SK-N-SH (cell line): ENCODE measurements at regions of chr14 and their contacts with region 1.

Region 1: DNA sequence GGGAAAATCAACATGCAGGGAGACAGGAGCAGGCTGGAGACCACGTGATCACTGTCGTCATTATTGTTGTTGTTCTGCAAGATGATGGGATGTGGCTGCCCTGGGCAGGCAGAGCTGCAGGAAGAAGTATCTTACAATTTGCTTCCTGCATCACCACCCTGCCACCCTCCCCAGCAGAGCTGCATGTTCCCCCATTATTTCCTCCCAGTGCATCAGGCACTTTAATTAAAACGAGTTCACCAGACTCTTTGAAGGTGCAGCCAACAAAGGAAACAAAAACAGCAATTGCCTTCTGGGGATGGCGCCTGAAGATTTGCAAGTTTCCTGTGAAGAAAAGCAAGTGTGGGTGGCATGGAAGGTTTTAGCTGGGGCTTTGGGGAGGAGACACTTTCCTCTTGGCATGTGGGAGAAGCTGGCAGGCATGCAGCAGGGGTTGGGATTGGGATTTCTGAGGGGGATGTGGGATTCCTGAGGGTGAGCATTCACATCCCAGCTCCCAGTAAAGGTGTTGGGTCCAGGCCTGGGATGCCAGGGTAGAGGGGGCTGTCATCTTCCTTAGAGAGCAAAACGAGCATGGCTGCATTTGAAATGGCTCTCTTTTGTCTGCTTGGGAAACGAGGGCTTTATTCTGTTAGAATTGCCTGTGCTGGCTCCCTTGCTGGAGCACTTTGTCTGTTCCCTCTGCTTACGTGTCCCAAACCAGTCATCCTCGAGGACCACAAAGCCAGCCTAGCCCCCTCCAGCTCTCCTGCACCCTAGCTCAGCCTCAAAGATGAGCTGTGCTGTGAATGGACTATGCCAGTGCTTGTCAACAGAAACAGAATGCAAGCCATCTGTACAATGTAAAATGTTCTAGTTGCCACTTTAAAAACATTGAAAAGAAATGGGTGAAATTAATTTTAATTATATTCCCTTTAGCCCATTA is 11.5 kb upstream of the C14orf132 start:
- DNase-seq: no peak
- H3K4me3 ChIP-seq: no peak overlapping the region
- H3K27ac ChIP-seq: no peak overlapping the region
- H3K4me1 ChIP-seq: peaks cover 0 to 8% of the 10 kb centered on the region in 2 experiments; a peak in 1 of 4 replicates
- H3K27me3 ChIP-seq: no peaks in the 10 kb centered on the region
- CTCF ChIP-seq: no peak
- EP300 ChIP-seq: no peak
- RAD21 ChIP-seq: no peak

Region 2: DNA sequence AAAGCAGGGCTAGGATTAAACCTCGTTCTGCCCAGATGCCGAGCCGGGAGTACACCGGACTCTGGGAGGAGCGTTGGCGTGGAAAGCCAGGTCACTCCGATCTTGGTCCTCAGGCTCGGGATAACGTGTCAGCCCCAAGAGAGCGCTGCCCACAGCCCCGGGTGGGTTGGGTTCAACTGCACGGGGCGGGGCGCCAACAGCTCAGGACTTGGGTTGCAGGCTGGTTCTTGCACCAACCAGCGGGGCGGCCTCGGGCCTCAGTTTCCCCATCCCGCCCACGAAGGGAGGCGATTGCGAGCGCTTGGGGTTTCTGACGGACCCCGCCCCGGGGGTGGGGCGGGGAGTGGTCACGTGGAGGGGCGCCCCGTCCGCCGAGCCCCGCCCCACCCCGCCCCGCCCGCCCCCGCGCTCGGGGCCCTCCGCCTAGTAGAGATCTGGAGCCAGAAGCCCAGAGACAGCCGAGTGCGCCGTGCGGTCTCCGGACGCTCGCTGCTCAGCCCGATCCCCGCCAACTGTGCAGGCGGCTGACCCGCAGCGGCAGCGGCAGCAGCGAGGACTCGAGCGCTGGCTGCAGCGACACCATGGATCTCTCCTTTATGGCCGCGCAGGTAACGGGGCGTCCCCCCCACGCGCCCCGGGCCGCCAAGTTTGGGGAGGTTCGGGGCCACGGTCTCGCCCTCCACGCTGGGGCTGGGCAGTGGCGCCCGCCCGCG is 11.4 kb after region 1 on chr14 and contains the start of gene C14orf132:
- CTCF ChIA-PET with region 1: interaction called, 11 read pairs
- POLR2A ChIA-PET with region 1: interaction called, 7 read pairs
- DNase-seq: peak; percentile 96
- H3K4me3 ChIP-seq: peak within 1 kb of the TSS; percentile 81 to 92
- H3K27ac ChIP-seq: peak within 1 kb of the TSS; percentile 45 to 90
- H3K4me1 ChIP-seq: peaks cover 7 to 32% of the 10 kb centered on the region in 2 experiments
- H3K27me3 ChIP-seq: no peaks in the 10 kb centered on the region
- CTCF ChIP-seq: no peak
- EP300 ChIP-seq: no peak
- RAD21 ChIP-seq: no peak
- polyA plus RNA-seq, gene C14orf132: 5.5 and 7.1 TPM in 2 replicates

Region 3: GRCh38 chr14:96176811-96177603 is 149.3 kb after region 1 on chr14:
- CTCF ChIA-PET with region 1: no interaction called
- POLR2A ChIA-PET with region 1: no interaction called
- DNase-seq: no peak
- H3K4me3 ChIP-seq: no peak overlapping the region
- H3K27ac ChIP-seq: no peak overlapping the region
- H3K4me1 ChIP-seq: peaks cover 0 to 7% of the 10 kb centered on the region in 2 experiments; a peak in 1 of 4 replicates
- H3K27me3 ChIP-seq: no peaks in the 10 kb centered on the region
- CTCF ChIP-seq: no peak
- EP300 ChIP-seq: no peak
- RAD21 ChIP-seq: no peak